ENCODE measurements at regions of chr22 and their contacts with region 1.

Region 1: DNA sequence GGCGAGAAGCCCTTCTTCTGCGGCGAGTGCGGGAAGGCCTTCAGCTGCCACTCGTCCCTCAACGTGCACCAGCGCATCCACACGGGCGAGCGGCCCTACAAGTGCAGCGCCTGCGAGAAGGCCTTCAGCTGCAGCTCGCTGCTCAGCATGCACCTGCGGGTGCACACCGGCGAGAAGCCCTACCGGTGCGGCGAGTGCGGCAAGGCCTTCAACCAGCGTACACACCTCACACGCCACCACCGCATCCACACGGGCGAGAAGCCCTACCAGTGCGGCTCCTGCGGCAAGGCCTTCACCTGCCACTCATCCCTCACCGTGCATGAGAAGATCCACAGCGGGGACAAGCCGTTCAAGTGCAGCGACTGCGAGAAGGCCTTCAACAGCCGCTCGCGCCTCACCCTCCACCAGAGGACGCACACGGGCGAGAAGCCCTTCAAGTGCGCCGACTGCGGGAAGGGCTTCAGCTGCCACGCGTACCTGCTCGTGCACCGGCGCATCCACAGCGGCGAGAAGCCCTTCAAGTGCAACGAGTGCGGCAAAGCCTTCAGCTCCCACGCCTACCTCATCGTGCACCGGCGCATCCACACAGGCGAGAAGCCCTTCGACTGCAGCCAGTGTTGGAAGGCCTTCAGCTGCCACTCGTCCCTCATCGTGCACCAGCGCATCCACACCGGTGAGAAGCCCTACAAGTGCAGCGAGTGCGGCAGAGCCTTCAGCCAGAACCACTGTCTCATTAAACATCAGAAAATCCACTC is 12.2 kb downstream of the ZNF74 start:
- DNase-seq: peak in 1 of 2 donors; percentile 90
- H3K4me3 ChIP-seq: no peak overlapping the region
- H3K27ac ChIP-seq: no peak overlapping the region
- H3K4me1 ChIP-seq: no peaks in the 10 kb centered on the region
- H3K27me3 ChIP-seq: no peaks in the 10 kb centered on the region
- CTCF ChIP-seq: no peak
- POLR2A ChIP-seq: no peak

Region 2: GRCh38 chr22:20238536-20238900 is 167.6 kb before region 1 on chr22:
- intact Hi-C with region 1: no loop called
- DNase-seq: no peak
- H3K4me3 ChIP-seq: no peak overlapping the region
- H3K27ac ChIP-seq: no peak overlapping the region
- H3K4me1 ChIP-seq: peaks cover 37% of the 10 kb centered on the region
- H3K27me3 ChIP-seq: no peaks in the 10 kb centered on the region
- CTCF ChIP-seq: no peak
- POLR2A ChIP-seq: no peak

Region 3: GRCh38 chr22:20463324-20464095 is 57.4 kb after region 1 on chr22:
- intact Hi-C with region 1: loop called (anchors 10 kb)
- DNase-seq: no peak
- H3K4me3 ChIP-seq: no peak overlapping the region
- H3K27ac ChIP-seq: peak overlapping the region; percentile 33
- H3K4me1 ChIP-seq: peaks cover 9% of the 10 kb centered on the region
- H3K27me3 ChIP-seq: no peaks in the 10 kb centered on the region
- CTCF ChIP-seq: no peak
- POLR2A ChIP-seq: no peak

Region 4: DNA sequence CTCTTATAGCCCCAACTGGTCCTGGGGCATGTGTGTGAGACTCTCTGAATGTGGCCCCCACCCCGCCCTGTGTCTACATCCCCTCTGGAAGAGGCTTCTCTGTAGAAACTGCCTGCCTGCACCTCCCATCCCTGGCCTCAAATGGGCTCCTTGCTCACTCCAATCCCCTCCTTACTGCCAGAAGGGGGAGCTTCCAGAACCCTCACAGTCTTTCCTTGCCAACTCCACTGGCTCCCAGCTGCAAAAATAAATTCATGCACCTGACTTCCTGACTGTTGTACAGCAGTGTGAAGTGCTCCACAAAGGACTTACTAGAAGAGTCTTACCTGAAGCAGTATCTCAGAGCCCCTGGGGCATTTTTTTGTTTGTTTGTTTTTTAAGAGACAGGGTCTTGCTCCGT is 352.6 kb after region 1 on chr22:
- intact Hi-C with region 1: no loop called
- DNase-seq: no peak
- H3K4me3 ChIP-seq: no peak overlapping the region
- H3K27ac ChIP-seq: no peak overlapping the region
- H3K4me1 ChIP-seq: no peaks in the 10 kb centered on the region
- H3K27me3 ChIP-seq: no peaks in the 10 kb centered on the region
- CTCF ChIP-seq: no peak
- POLR2A ChIP-seq: no peak

Region 5: DNA sequence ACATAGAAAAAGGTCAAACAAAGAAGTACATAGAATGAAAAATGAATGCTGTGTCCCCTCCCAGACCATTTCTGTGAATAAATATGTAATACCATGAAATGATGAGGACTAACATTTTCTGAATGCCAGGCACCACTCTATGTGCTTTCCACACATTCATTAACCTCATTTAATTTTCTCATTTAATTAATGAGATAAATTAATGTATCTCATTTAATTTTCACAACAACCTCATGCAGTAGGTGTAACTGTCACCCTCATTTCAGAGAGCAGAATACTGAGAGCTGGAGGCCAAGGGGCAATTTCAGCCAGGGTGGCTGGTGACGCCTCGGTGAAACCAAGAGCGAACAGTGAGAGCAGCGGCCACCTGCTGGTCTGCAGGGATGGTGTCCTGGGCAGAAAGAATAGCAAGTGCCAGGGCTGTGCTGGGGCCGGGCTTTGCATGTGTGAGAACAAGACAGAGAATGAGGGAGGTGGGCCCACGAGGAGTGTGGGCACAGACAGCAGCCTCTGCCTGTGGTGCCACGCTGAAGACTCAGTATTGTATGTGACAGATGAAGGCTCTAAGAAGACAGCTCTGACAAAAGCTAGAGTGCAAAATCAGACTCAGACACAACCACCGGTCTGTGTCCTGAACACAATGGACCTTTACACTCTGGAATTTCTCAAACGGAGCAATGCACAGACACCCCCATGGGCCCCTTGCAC is 366.0 kb after region 1 on chr22:
- intact Hi-C with region 1: no loop called
- DNase-seq: no peak
- H3K4me3 ChIP-seq: no peak overlapping the region
- H3K27ac ChIP-seq: no peak overlapping the region
- H3K4me1 ChIP-seq: peaks cover under 1% of the 10 kb centered on the region
- H3K27me3 ChIP-seq: no peaks in the 10 kb centered on the region
- CTCF ChIP-seq: no peak
- POLR2A ChIP-seq: no peak